ENCODE measurements at regions of chr12 and their contacts with region 1.

Region 1: GRCh38 chr12:131340616-131341210 is 370.2 kb upstream of the SFSWAP start:
- DNase-seq: no peak
- H3K4me3 ChIP-seq: no peak overlapping the region
- H3K27ac ChIP-seq: no peak overlapping the region
- H3K4me1 ChIP-seq: no peaks in the 10 kb centered on the region
- H3K27me3 ChIP-seq: no peaks in the 10 kb centered on the region
- CTCF ChIP-seq: no peak
- POLR2A ChIP-seq: no peak

Region 2: GRCh38 chr12:130909111-130909510 is 431.6 kb before region 1 on chr12:
- CTCF ChIA-PET with region 1: no interaction called
- POLR2A ChIA-PET with region 1: no interaction called
- dilution Hi-C with region 1: no loop called
- intact Hi-C with region 1: no loop called
- DNase-seq: no peak
- H3K4me3 ChIP-seq: no peak overlapping the region
- H3K27ac ChIP-seq: no peak overlapping the region
- H3K4me1 ChIP-seq: no peaks in the 10 kb centered on the region
- H3K27me3 ChIP-seq: no peaks in the 10 kb centered on the region
- CTCF ChIP-seq: no peak
- POLR2A ChIP-seq: no peak

Region 3: DNA sequence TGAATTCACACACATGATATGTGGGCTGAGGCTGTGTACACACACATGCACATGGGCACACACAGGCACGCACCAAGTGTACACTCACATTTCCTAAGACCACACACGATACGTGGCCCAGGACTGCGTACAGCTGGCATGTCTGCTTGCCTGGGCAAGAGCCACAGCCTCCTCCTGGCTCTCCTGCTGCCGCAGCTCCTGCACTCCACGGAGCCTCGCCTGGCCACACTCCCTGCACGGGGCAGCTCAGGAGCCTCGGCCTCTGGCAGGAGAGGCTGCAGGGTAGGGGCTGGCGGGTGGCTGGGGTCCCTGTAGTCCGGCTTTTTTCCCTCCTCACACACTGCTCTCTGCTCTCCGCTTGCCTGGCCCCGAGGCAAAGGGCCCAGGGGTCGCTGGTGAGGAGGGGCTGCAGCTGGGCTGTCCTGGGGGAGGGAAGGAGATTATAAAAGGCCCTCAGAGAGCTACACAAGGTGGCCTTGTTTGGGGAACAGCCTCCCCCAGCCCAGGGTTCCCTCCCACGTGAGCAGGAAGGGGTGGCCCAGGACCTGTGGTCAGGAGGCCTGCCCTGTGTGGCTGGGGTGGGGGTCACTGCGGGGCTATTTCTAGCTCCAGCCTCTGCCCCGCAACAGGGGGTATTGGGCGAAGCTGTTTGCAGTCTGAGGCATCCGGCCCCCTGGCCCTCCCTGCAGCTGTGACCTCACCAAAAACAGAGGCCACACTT is 281.1 kb after region 1 on chr12:
- CTCF ChIA-PET with region 1: no interaction called
- POLR2A ChIA-PET with region 1: no interaction called
- dilution Hi-C with region 1: no loop called
- intact Hi-C with region 1: loop called (anchors 5 kb)
- DNase-seq: no peak
- H3K4me3 ChIP-seq: no peak overlapping the region
- H3K27ac ChIP-seq: no peak overlapping the region
- H3K4me1 ChIP-seq: no peaks in the 10 kb centered on the region
- H3K27me3 ChIP-seq: no peaks in the 10 kb centered on the region
- CTCF ChIP-seq: no peak
- POLR2A ChIP-seq: no peak

Measured in endothelial cell of umbilical vein (primary cell).